ENCODE measurements at regions of chr21 and their contacts with region 1.

Region 1: GRCh38 chr21:33380483-33380998 is 22.7 kb upstream of the IFNGR2 start:
- DNase-seq: peak; percentile 92
- H3K4me3 Mint-ChIP-seq: peak overlapping the region; percentile 51
- H3K27ac Mint-ChIP-seq: peak overlapping the region; percentile 84
- H3K4me1 Mint-ChIP-seq: peaks cover 55% of the 10 kb centered on the region
- H3K27me3 Mint-ChIP-seq: peaks cover 27% of the 10 kb centered on the region

Region 2: DNA sequence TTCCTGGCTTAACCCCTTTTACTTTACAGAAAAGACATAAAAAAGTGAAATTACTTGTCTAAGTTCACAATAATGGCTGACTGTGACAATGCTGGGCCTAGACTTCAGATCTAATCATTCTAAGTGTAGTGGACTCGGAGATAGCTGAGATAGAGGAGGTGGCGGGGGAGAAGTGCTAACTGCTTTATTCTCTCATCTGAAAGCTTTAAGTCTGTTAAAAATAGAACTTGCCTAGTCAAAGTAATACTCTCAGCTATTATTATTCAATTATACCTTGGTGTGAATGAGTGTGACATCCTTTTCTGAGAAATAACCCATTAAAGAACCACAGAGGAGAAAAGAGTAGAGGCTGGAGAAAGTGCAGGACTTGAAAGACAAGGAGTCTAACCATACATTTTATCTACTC is 450.9 kb before region 1 on chr21:
- intact Hi-C with region 1: loop called (anchors 5 kb)
- DNase-seq: no peak
- H3K4me3 Mint-ChIP-seq: no peak overlapping the region
- H3K27ac Mint-ChIP-seq: no peak overlapping the region
- H3K4me1 Mint-ChIP-seq: peaks cover 23% of the 10 kb centered on the region
- H3K27me3 Mint-ChIP-seq: peaks cover under 1% of the 10 kb centered on the region

Region 3: GRCh38 chr21:33259995-33260394 is 120.5 kb before region 1 on chr21:
- intact Hi-C with region 1: loop called (anchors 5 kb)
- DNase-seq: no peak
- H3K4me3 Mint-ChIP-seq: no peak overlapping the region
- H3K27ac Mint-ChIP-seq: no peak overlapping the region
- H3K4me1 Mint-ChIP-seq: peaks cover 43% of the 10 kb centered on the region
- H3K27me3 Mint-ChIP-seq: no peaks in the 10 kb centered on the region

Region 4: GRCh38 chr21:33360881-33361602 is 19.5 kb before region 1 on chr21:
- intact Hi-C with region 1: loop called (anchors 1 kb)
- DNase-seq: peak; percentile 94
- H3K4me3 Mint-ChIP-seq: peak overlapping the region; percentile 73
- H3K27ac Mint-ChIP-seq: peak overlapping the region; percentile 10
- H3K4me1 Mint-ChIP-seq: peaks cover 17% of the 10 kb centered on the region
- H3K27me3 Mint-ChIP-seq: no peaks in the 10 kb centered on the region

Region 5: DNA sequence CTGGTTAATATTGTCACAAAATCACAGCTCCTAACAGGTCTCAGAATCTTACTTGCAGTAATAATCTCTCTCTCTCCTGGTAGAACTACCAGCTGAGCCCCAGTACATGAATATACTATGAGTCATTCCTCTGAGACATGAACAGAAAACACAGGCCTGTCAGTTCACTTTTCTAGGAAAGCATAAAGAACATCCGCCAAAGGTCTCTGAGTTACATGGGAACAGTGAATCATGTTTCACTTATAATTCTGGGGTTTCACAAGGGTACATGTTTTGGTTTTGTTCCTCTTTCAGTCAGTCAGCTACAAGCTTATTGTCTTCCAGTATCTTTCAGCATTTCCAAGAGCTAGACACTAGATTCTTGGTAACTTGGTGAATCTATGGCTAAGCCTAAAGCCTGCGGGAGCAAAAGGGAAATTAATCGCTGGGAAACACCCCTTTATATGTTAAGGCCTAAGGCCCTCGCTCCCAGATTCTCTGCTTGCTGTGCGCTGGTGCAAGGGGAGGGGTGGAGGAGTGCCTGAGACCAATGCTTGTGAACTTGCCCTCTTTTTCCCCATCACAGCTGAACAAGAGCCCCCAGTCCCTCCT is 54.3 kb after region 1 on chr21:
- intact Hi-C with region 1: loop called (anchors 1 kb)
- DNase-seq: peak; percentile 81
- H3K4me3 Mint-ChIP-seq: peak overlapping the region; percentile 71
- H3K27ac Mint-ChIP-seq: peak overlapping the region; percentile 86
- H3K4me1 Mint-ChIP-seq: peaks cover 24% of the 10 kb centered on the region
- H3K27me3 Mint-ChIP-seq: no peaks in the 10 kb centered on the region

Region 6: GRCh38 chr21:33641336-33642026 is 260.9 kb after region 1 on chr21 and contains the start of gene CRYZL1:
- intact Hi-C with region 1: loop called (anchors 5 kb)
- DNase-seq: peak; percentile 100
- H3K4me3 Mint-ChIP-seq: peak within 1 kb of the TSS; percentile 88
- H3K27ac Mint-ChIP-seq: peak within 1 kb of the TSS; percentile 94
- H3K4me1 Mint-ChIP-seq: peaks cover 20% of the 10 kb centered on the region
- H3K27me3 Mint-ChIP-seq: peaks cover 27% of the 10 kb centered on the region
- total RNA-seq, gene CRYZL1: 26.3 and 34.8 TPM in 2 replicates